ENCODE measurements at regions of chr6 and their contacts with region 1.

Region 1: DNA sequence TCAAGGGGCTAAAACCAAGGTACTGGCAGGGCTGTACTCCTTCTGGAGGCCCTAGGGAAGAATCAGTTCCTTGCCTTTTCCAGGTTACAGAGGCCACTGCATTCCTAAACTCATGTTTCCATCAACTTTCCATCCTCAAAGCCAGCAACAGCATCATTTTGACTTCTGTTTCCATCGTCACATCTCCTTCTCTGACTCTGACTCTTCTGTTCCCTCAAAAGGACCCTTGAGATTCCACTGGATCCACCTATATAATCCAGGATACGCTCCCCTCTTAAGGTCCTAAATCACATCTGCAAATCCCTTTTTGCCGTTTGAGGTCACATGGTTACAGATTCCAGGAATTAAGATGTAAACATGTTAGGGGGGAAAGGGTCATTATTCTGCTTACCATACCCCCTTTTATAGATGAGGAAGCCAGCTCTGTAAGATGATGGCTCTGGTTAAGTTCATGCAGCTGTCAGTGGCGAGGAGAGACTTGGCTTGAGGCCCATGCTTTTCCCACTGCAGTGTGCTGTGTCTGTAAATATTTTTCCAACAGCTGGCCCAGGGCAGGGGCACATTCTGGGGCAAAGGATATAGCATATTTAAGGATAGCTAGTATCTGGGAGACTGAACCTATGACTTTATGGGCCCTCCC is 114.6 kb downstream of the TNFRSF21 start:
- DNase-seq: no peak
- H3K4me3 Mint-ChIP-seq: no peak overlapping the region
- H3K27ac Mint-ChIP-seq: peak overlapping the region; percentile 28
- H3K4me1 Mint-ChIP-seq: peaks cover 37% of the 10 kb centered on the region
- H3K27me3 Mint-ChIP-seq: no peaks in the 10 kb centered on the region
- CTCF ChIP-seq: no peak

Region 2: DNA sequence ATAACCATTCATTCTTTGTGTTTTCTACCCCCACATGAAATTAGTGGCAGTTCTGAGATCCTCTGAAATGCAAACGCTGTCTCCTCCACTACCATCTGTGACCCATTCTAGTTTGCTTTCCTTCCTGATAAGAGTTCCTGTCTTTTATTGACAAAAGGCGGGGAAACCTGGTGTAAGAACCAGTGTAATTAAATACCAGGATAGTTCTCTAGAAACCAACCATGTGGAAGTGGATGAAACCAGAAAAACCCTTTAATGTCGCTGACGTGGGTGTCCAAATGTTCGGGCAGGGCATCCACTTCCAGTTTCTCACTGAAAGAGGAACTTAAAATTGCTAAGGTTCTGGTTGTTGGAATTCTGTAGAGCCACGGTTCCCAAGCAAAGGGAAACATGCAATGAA is 35.4 kb after region 1 on chr6:
- CTCF ChIA-PET with region 1: no interaction called
- intact Hi-C with region 1: loop called (anchors 5 kb)
- DNase-seq: no peak
- H3K4me3 Mint-ChIP-seq: peak overlapping the region; percentile 26
- H3K27ac Mint-ChIP-seq: peak overlapping the region; percentile 82
- H3K4me1 Mint-ChIP-seq: peaks cover 43% of the 10 kb centered on the region
- H3K27me3 Mint-ChIP-seq: no peaks in the 10 kb centered on the region
- CTCF ChIP-seq: no peak

Region 3: GRCh38 chr6:47752801-47753200 is 557.7 kb after region 1 on chr6:
- CTCF ChIA-PET with region 1: no interaction called
- intact Hi-C with region 1: no loop called
- DNase-seq: no peak
- H3K4me3 Mint-ChIP-seq: no peak overlapping the region
- H3K27ac Mint-ChIP-seq: no peak overlapping the region
- H3K4me1 Mint-ChIP-seq: peaks cover 8% of the 10 kb centered on the region
- H3K27me3 Mint-ChIP-seq: no peaks in the 10 kb centered on the region
- CTCF ChIP-seq: no peak